Mammary epithelial cell (primary cell): ENCODE measurements at regions of chr16 and their contacts with region 1.

Region 1: DNA sequence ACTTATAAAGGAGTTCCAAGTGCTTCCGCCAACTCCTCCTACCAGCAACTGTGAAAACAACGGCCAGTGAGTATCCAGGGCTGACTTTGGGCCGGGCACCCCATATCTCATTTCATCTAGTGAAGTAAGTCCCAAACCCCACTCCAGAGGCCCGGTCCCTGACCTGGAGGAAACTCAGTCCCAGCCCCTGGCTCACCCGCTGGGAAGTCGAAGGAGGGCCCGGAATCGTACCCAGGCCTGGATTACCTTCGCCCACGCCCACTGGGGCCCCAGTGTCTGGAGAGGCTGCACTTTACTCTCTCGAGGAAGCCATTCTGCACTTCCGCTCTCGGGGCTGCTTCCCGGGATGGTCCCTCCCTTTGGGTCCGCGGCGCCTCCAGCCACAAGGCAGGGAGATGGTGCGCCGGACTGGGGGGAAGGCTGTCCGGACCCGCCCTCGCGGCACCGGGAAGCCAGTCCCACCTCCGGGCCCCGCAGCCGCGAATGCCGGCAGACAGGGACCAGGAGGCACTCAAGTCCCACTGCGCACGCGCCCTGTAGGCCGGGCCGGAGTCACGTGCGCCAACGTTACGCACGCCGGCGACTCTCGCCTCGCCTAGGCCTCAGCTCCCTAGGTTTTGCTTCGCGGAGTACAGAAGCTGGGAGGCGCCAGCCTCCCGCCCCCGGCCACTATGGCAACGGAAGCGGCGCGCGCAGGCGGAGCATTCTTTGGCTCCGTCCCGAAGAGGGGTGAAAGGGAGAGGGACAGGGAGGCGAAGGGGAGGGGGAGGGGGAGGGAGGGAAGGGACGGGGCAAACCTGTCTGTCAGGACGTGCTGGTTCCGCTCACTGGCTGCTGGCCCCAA is at the start of gene CMTR2:
- DNase-seq: peak; percentile 98
- H3K4me3 ChIP-seq: peak within 1 kb of the TSS; percentile 66 to 90 (median 68)
- H3K27ac ChIP-seq: peak within 1 kb of the TSS; percentile 84
- H3K4me1 ChIP-seq: peaks cover 4% of the 10 kb centered on the region
- H3K27me3 ChIP-seq: no peaks in the 10 kb centered on the region
- CTCF ChIP-seq: no peak
- total RNA-seq, gene CMTR2: 24.1 to 36.5 TPM

Region 2: GRCh38 chr16:71230122-71230845 is 58.8 kb before region 1 on chr16 and contains the start of gene HYDIN:
- CTCF ChIA-PET with region 1: no interaction called
- dilution Hi-C with region 1: no loop called
- in situ Hi-C with region 1: no loop called
- intact Hi-C with region 1: loop called (anchors 5 kb)
- DNase-seq: peak; percentile 71
- H3K4me3 ChIP-seq: peak within 1 kb of the TSS; percentile 56 to 63 (median 57)
- H3K27ac ChIP-seq: peak within 1 kb of the TSS; percentile 43
- H3K4me1 ChIP-seq: peaks cover 5% of the 10 kb centered on the region
- H3K27me3 ChIP-seq: no peaks in the 10 kb centered on the region
- CTCF ChIP-seq: no peak
- total RNA-seq, gene HYDIN: 1.6 to 5.5 TPM

Region 3: GRCh38 chr16:71328151-71328550 is 39.0 kb after region 1 on chr16:
- CTCF ChIA-PET with region 1: no interaction called
- dilution Hi-C with region 1: loop called (anchors 5 kb)
- in situ Hi-C with region 1: no loop called
- intact Hi-C with region 1: no loop called
- DNase-seq: no peak
- H3K4me3 ChIP-seq: no peak overlapping the region
- H3K27ac ChIP-seq: no peak overlapping the region
- H3K4me1 ChIP-seq: no peaks in the 10 kb centered on the region
- H3K27me3 ChIP-seq: no peaks in the 10 kb centered on the region
- CTCF ChIP-seq: no peak

Region 4: DNA sequence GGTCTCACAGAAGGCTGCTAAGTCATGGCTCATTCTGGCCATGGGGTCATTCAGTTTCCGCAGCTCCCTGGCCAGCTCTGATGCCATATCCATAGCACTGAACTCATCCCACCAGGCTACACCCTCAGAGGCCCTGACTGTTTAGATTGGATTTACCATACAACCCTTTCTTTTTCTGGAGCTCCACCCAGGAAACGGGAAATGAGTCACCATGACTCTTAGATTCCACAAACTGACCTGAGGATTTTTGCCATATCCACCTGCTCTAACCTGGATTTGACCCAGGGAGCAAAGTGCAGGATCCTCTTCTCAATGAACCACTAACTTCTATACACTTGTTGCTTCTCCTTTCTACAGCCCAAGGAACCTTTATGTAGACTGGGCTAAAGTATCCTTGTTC is 49.1 kb after region 1 on chr16:
- CTCF ChIA-PET with region 1: no interaction called
- dilution Hi-C with region 1: no loop called
- in situ Hi-C with region 1: no loop called
- intact Hi-C with region 1: loop called (anchors 1 kb)
- DNase-seq: peak; percentile 88
- H3K4me3 ChIP-seq: no peak overlapping the region
- H3K27ac ChIP-seq: peak overlapping the region; percentile 82
- H3K4me1 ChIP-seq: peaks cover 24% of the 10 kb centered on the region
- H3K27me3 ChIP-seq: no peaks in the 10 kb centered on the region
- CTCF ChIP-seq: no peak

Region 5: DNA sequence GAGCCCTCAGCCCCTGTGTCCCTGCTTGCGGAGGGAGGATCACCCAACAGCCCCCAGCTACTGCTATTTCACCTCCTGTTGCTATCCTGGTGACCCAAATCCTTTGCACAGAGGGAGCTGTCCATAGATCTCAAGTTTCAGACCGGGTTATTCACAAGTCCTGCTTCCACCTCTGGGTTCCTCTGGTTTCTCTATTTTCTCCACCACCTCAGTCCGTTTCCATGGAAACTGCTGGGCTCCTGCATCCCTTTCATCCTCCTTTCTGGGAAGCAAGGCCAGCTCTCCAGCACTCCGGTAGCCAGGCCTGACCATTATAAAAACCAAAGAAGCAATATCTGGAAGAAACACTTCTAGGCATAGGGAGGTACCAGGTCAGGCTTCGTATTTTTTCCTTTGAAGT is 64.6 kb after region 1 on chr16:
- CTCF ChIA-PET with region 1: no interaction called
- dilution Hi-C with region 1: no loop called
- in situ Hi-C with region 1: no loop called
- intact Hi-C with region 1: no loop called
- DNase-seq: no peak
- H3K4me3 ChIP-seq: no peak overlapping the region
- H3K27ac ChIP-seq: no peak overlapping the region
- H3K4me1 ChIP-seq: peaks cover 18% of the 10 kb centered on the region
- H3K27me3 ChIP-seq: no peaks in the 10 kb centered on the region
- CTCF ChIP-seq: no peak

Region 6: DNA sequence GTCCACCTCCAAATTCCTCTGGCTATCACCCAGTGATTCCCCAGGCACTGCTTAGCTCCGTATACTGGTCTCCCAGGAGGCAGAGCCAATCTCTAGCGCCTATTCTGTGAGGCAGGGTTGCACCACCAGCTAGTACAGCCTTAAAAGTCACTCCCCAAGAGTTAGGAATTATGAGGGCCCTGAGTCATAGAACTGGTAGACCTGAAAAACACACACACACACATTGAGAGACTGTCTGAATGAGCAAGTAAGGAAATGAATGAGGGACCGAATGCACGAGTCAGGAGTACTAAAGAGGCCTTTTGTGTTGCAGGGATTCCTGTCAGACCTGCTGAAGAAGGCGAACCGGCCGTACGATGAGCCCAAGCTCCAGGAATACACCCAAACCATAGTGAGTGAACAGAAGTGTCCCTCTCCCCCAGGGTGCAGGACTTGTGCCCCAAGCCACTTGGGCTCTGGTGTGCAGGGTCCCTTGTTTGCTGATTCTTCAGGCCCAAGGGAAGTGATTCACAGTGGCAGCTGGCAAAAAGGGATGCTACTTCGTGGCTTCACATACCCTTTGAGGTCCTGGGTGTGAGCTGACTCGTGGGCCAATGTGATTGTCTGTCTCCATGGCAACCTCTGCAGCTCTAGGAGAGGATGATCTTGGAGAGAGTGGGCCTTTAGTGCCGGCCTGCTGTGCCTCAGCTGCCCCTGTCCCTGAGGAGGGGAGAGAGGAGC is 94.1 kb after region 1 on chr16:
- CTCF ChIA-PET with region 1: no interaction called
- dilution Hi-C with region 1: no loop called
- in situ Hi-C with region 1: no loop called
- intact Hi-C with region 1: no loop called
- DNase-seq: peak; percentile 76
- H3K4me3 ChIP-seq: no peak overlapping the region
- H3K27ac ChIP-seq: no peak overlapping the region
- H3K4me1 ChIP-seq: no peaks in the 10 kb centered on the region
- H3K27me3 ChIP-seq: peaks cover 2% of the 10 kb centered on the region
- CTCF ChIP-seq: no peak

Region 7: GRCh38 chr16:71734511-71734910 is 445.4 kb after region 1 on chr16:
- CTCF ChIA-PET with region 1: no interaction called
- dilution Hi-C with region 1: no loop called
- in situ Hi-C with region 1: no loop called
- intact Hi-C with region 1: no loop called
- DNase-seq: no peak
- H3K4me3 ChIP-seq: no peak overlapping the region
- H3K27ac ChIP-seq: no peak overlapping the region
- H3K4me1 ChIP-seq: no peaks in the 10 kb centered on the region
- H3K27me3 ChIP-seq: no peaks in the 10 kb centered on the region
- CTCF ChIP-seq: no peak

Region 8: GRCh38 chr16:71883849-71884638 is 594.9 kb after region 1 on chr16 and contains the start of gene ZNF821:
- CTCF ChIA-PET with region 1: no interaction called
- dilution Hi-C with region 1: no loop called
- in situ Hi-C with region 1: no loop called
- intact Hi-C with region 1: no loop called
- DNase-seq: peak; percentile 54
- H3K4me3 ChIP-seq: peak within 1 kb of the TSS; percentile 77 to 82 (median 79)
- H3K27ac ChIP-seq: peak within 1 kb of the TSS; percentile 32
- H3K4me1 ChIP-seq: peaks cover 10% of the 10 kb centered on the region
- H3K27me3 ChIP-seq: no peaks in the 10 kb centered on the region
- CTCF ChIP-seq: peak in 1 of 2 donors; percentile 42
- total RNA-seq, gene ZNF821: 5.6 to 6.2 TPM